B cell (primary cell): ENCODE measurements at regions of chr9 and their contacts with region 1.

Region 1: GRCh38 chr9:101966691-101967090 is 228.2 kb upstream of the GRIN3A start:
- DNase-seq: no peak
- ATAC-seq: no peak
- H3K4me3 ChIP-seq: no peak overlapping the region
- H3K4me3 Mint-ChIP-seq: no peak overlapping the region
- H3K27ac ChIP-seq: no peak overlapping the region
- H3K27ac Mint-ChIP-seq: no peak overlapping the region
- H3K4me1 ChIP-seq: no peaks in the 10 kb centered on the region
- H3K4me1 Mint-ChIP-seq: no peaks in the 10 kb centered on the region
- H3K27me3 ChIP-seq: no peaks in the 10 kb centered on the region
- H3K27me3 Mint-ChIP-seq: no peaks in the 10 kb centered on the region
- CTCF ChIP-seq: no peak

Region 2: GRCh38 chr9:101951598-101951997 is 15.1 kb before region 1 on chr9:
- CTCF ChIA-PET with region 1: no interaction called
- POLR2A ChIA-PET with region 1: no interaction called
- intact Hi-C with region 1: loop called (anchors 1 kb)
- DNase-seq: no peak
- ATAC-seq: no peak
- H3K4me3 ChIP-seq: no peak overlapping the region
- H3K4me3 Mint-ChIP-seq: no peak overlapping the region
- H3K27ac ChIP-seq: no peak overlapping the region
- H3K27ac Mint-ChIP-seq: no peak overlapping the region
- H3K4me1 ChIP-seq: no peaks in the 10 kb centered on the region
- H3K4me1 Mint-ChIP-seq: no peaks in the 10 kb centered on the region
- H3K27me3 ChIP-seq: no peaks in the 10 kb centered on the region
- H3K27me3 Mint-ChIP-seq: no peaks in the 10 kb centered on the region
- CTCF ChIP-seq: no peak

Region 3: DNA sequence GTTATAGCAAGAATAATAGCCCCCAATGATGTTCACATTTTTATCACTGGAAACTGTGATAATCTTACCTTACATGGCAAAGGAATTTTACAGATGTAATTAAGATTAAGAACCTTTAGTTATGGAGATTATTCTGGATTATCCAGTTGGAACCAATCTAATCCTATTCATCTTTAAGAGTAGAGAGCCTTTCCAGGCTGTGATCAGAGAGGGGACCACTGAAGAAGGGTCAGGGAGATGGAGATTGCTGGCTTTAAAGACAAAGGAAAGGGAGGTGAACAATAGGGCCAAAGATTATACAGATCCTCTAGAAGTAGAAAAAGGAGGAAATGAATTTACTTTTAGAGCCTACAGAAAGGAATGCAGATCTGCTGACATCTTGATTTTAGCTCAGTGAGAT is 25.2 kb after region 1 on chr9:
- CTCF ChIA-PET with region 1: no interaction called
- POLR2A ChIA-PET with region 1: no interaction called
- intact Hi-C with region 1: no loop called
- DNase-seq: no peak
- ATAC-seq: no peak
- H3K4me3 ChIP-seq: no peak overlapping the region
- H3K4me3 Mint-ChIP-seq: no peak overlapping the region
- H3K27ac ChIP-seq: no peak overlapping the region
- H3K27ac Mint-ChIP-seq: no peak overlapping the region
- H3K4me1 ChIP-seq: no peaks in the 10 kb centered on the region
- H3K4me1 Mint-ChIP-seq: no peaks in the 10 kb centered on the region
- H3K27me3 ChIP-seq: no peaks in the 10 kb centered on the region
- H3K27me3 Mint-ChIP-seq: no peaks in the 10 kb centered on the region
- CTCF ChIP-seq: no peak

Region 4: DNA sequence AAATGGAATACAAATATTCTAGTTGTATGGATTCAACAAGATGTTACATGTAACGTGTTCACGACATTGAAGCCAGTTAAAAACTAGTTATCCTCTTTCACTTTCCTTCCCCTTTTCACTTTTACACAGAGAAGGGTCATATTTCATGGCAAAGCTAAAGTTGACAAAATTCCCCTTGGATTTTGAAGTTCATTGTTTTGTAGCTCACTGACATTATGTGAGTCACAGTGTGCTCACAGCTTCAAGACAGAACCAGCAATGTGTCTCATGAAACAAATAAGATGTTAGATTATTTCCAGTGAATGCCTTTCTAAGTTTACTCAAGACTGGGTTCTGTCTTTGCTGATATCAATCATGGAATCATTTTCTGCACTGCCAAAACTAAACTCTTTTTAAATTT is 307.3 kb after region 1 on chr9:
- CTCF ChIA-PET with region 1: no interaction called
- POLR2A ChIA-PET with region 1: no interaction called
- intact Hi-C with region 1: no loop called
- DNase-seq: no peak
- ATAC-seq: no peak
- H3K4me3 ChIP-seq: no peak overlapping the region
- H3K4me3 Mint-ChIP-seq: no peak overlapping the region
- H3K27ac ChIP-seq: no peak overlapping the region
- H3K27ac Mint-ChIP-seq: no peak overlapping the region
- H3K4me1 ChIP-seq: no peaks in the 10 kb centered on the region
- H3K4me1 Mint-ChIP-seq: no peaks in the 10 kb centered on the region
- H3K27me3 ChIP-seq: no peaks in the 10 kb centered on the region
- H3K27me3 Mint-ChIP-seq: no peaks in the 10 kb centered on the region
- CTCF ChIP-seq: no peak

Region 5: GRCh38 chr9:103649086-103649485 is 1682.4 kb after region 1 on chr9:
- CTCF ChIA-PET with region 1: no interaction called
- POLR2A ChIA-PET with region 1: no interaction called
- intact Hi-C with region 1: no loop called
- DNase-seq: no peak
- ATAC-seq: no peak
- H3K4me3 ChIP-seq: no peak overlapping the region
- H3K4me3 Mint-ChIP-seq: no peak overlapping the region
- H3K27ac ChIP-seq: no peak overlapping the region
- H3K27ac Mint-ChIP-seq: no peak overlapping the region
- H3K4me1 ChIP-seq: no peaks in the 10 kb centered on the region
- H3K4me1 Mint-ChIP-seq: no peaks in the 10 kb centered on the region
- H3K27me3 ChIP-seq: no peaks in the 10 kb centered on the region
- H3K27me3 Mint-ChIP-seq: no peaks in the 10 kb centered on the region
- CTCF ChIP-seq: no peak